Left ventricle myocardium superior (tissue), 1 donor: ENCODE measurements at regions of chr12 and their contacts with region 1.

Region 1: DNA sequence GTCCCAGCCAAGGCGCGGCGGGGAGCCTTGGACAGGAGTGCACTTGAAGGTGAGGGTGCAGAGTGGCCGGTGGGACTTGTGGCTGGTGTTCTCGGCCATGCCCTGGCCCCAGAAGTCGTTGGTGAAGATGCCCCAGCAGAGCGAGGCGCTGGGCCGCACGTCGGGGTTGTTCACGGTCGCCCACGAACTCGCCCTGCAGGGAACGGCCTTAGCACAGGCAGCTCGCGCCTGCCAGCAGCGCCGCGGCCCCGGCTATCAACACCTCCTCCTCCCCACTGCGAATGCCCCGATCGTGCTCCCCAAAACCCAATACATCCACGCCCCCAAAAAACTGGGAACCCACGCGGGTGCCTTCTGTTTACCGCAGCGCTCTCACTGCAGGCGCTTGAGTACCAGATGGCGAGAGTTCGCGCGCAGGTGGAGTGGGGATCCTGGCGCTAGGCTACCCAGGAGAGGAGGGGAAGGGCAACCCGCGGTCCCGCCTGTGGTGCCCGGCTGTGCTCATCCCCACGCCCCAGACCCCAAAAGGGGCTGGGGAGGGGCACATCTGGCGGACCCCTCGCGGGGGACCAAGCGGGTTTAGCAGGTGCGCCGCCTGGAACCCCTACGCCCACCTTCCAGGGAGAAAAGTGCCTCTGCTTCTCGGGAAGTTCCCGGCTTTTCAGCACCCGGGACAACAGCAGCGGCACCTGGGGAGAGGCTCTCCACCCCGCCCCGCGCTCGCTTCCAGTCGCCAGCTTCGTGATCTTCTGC is 386.3 kb upstream of the TMTC1 start:
- DNase-seq: no peak
- ATAC-seq: no peak

Region 2: DNA sequence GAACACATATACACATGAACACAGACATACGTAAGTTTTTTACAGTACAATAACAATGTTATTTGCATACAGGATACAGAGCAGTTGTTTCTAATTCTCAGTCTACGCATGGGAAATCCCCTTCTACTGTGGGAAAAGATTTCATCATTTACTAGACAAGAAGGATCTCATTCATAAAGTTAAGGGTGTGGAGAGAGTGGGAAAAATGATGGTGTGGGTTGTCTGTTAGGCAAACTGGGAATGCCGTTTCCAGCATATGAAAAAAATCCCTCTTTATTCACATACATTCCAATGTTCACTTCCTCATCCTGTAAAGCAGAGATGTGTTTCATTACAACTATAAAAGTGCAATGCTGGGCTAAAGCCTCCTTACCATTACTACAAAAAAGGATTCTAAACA is 1035.0 kb after region 1 on chr12:
- intact Hi-C with region 1: loop called (anchors 5 kb)
- DNase-seq: no peak
- ATAC-seq: peak; percentile 62